CD8-positive, alpha-beta T cell (primary cell): ENCODE measurements at regions of chr18 and their contacts with region 1.

Region 1: DNA sequence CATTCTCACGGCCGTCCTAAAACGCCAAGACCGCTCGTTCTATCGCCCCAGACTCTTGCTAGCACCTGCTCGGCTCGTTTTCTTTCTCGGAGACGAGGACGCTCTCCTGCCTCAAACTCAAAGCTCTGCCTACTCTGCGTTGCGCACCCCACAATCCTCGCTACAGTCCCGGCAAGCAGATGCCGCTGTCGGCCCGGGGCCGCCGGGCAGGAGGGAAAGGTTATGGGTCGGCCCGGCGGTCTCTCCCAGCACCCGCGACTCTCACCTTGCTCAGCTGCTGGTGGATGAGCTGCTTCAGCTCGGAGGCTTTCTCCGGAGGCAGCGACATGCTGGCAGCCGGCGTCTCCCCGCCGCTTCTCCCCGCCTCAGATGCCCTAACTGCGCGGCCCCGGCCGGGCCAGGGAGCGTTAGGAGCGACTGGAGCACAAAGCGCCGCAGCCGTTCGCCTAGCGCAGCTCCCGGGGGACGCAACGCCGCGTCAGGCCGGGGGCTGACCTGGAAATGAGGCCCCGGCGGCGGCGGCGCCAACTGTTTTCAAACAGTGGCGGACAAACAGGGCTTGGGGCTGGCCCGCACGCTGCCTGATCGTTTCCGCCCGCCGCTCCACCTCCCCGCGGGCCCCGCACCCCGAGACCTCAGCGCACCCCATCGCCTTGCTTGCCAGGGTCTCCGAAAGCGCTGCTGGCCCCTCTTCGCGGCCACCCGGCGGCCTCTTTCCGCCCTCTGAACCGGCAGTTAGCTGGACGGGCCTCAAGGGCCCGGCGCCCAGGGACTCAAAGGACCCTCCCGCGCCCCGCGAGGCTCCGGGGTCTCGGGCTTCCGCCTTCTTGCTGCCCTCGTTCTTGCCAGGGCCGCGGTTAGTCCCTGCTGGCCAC is at the starts of genes CEP76 and PSMG2:
- DNase-seq: peak; percentile 68 to 91 (median 83)
- ATAC-seq: peak; percentile 78
- H3K4me3 ChIP-seq: peak within 1 kb of the TSS; percentile 70 to 96
- H3K4me3 Mint-ChIP-seq: peak within 1 kb of the TSS; percentile 96
- H3K27ac ChIP-seq: peak within 1 kb of the TSS; percentile 95 to 98
- H3K27ac Mint-ChIP-seq: peak within 1 kb of the TSS; percentile 100
- H3K4me1 ChIP-seq: peaks cover 30% of the 10 kb centered on the region
- H3K4me1 Mint-ChIP-seq: peaks cover 52% of the 10 kb centered on the region
- H3K27me3 ChIP-seq: no peaks in the 10 kb centered on the region
- H3K27me3 Mint-ChIP-seq: no peaks in the 10 kb centered on the region
- CTCF ChIP-seq: no peak
- total RNA-seq, gene CEP76: 10.9 to 11.0 TPM
- total RNA-seq, gene PSMG2: 80.3 to 81.7 TPM

Region 2: GRCh38 chr18:11119962-11120361 is 1582.5 kb before region 1 on chr18:
- CTCF ChIA-PET with region 1: no interaction called
- POLR2A ChIA-PET with region 1: no interaction called
- intact Hi-C with region 1: no loop called
- DNase-seq: no peak
- ATAC-seq: no peak
- H3K4me3 ChIP-seq: no peak overlapping the region
- H3K4me3 Mint-ChIP-seq: no peak overlapping the region
- H3K27ac ChIP-seq: no peak overlapping the region
- H3K27ac Mint-ChIP-seq: no peak overlapping the region
- H3K4me1 ChIP-seq: no peaks in the 10 kb centered on the region
- H3K4me1 Mint-ChIP-seq: no peaks in the 10 kb centered on the region
- H3K27me3 ChIP-seq: no peaks in the 10 kb centered on the region
- H3K27me3 Mint-ChIP-seq: no peaks in the 10 kb centered on the region
- CTCF ChIP-seq: no peak

Region 3: GRCh38 chr18:12408247-12408869 is 294.1 kb before region 1 on chr18:
- CTCF ChIA-PET with region 1: no interaction called
- POLR2A ChIA-PET with region 1: interaction called, 3 read pairs
- intact Hi-C with region 1: loop called in 1 of 2 experiments (anchors 2 kb)
- DNase-seq: peak in 3 of 9 experiments; percentile 31 to 52 (median 42)
- ATAC-seq: peak; percentile 9
- H3K4me3 ChIP-seq: peak overlapping the region in 1 of 2 experiments; percentile 71
- H3K4me3 Mint-ChIP-seq: peak overlapping the region; percentile 72
- H3K27ac ChIP-seq: no peak overlapping the region
- H3K27ac Mint-ChIP-seq: peak overlapping the region; percentile 30
- H3K4me1 ChIP-seq: peaks cover 18% of the 10 kb centered on the region
- H3K4me1 Mint-ChIP-seq: peaks cover 21% of the 10 kb centered on the region
- H3K27me3 ChIP-seq: no peaks in the 10 kb centered on the region
- H3K27me3 Mint-ChIP-seq: peaks cover 10% of the 10 kb centered on the region
- CTCF ChIP-seq: no peak

Region 4: DNA sequence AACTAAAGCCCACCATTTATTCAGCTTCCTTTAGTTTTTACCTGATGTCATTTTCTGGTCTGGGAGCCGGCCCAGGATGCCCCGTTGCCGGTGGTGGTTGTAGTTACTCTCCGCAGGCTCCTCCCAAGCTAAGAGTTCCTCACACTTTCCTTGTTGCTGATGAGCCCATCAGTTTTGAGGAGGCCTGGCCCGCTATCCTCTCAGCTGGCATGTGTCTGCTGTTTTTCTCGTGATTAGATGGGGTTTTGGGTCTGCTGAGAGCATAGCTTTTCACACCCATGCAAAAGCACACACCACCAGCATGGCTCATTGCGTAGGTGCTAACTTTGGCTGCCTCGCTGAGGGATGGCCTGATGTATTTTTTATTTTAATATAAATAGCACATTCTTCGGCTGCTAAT is 72.5 kb after region 1 on chr18:
- CTCF ChIA-PET with region 1: no interaction called
- POLR2A ChIA-PET with region 1: interaction called, 11 read pairs
- intact Hi-C with region 1: no loop called
- DNase-seq: peak in 5 of 9 experiments; percentile 7 to 79 (median 30)
- ATAC-seq: peak; percentile 62
- H3K4me3 ChIP-seq: peak overlapping the region; percentile 63
- H3K4me3 Mint-ChIP-seq: peak overlapping the region; percentile 87
- H3K27ac ChIP-seq: peak overlapping the region; percentile 71 to 76
- H3K27ac Mint-ChIP-seq: peak overlapping the region; percentile 94
- H3K4me1 ChIP-seq: no peaks in the 10 kb centered on the region
- H3K4me1 Mint-ChIP-seq: peaks cover 28% of the 10 kb centered on the region
- H3K27me3 ChIP-seq: no peaks in the 10 kb centered on the region
- H3K27me3 Mint-ChIP-seq: no peaks in the 10 kb centered on the region
- CTCF ChIP-seq: no peak

Region 5: GRCh38 chr18:12973562-12974213 is 271.2 kb after region 1 on chr18:
- CTCF ChIA-PET with region 1: no interaction called
- POLR2A ChIA-PET with region 1: no interaction called
- intact Hi-C with region 1: no loop called
- DNase-seq: peak in 1 of 9 experiments; percentile 21
- ATAC-seq: no peak
- H3K4me3 ChIP-seq: no peak overlapping the region
- H3K4me3 Mint-ChIP-seq: no peak overlapping the region
- H3K27ac ChIP-seq: no peak overlapping the region
- H3K27ac Mint-ChIP-seq: no peak overlapping the region
- H3K4me1 ChIP-seq: no peaks in the 10 kb centered on the region
- H3K4me1 Mint-ChIP-seq: peaks cover 3% of the 10 kb centered on the region
- H3K27me3 ChIP-seq: no peaks in the 10 kb centered on the region
- H3K27me3 Mint-ChIP-seq: no peaks in the 10 kb centered on the region
- CTCF ChIP-seq: no peak

Region 6: DNA sequence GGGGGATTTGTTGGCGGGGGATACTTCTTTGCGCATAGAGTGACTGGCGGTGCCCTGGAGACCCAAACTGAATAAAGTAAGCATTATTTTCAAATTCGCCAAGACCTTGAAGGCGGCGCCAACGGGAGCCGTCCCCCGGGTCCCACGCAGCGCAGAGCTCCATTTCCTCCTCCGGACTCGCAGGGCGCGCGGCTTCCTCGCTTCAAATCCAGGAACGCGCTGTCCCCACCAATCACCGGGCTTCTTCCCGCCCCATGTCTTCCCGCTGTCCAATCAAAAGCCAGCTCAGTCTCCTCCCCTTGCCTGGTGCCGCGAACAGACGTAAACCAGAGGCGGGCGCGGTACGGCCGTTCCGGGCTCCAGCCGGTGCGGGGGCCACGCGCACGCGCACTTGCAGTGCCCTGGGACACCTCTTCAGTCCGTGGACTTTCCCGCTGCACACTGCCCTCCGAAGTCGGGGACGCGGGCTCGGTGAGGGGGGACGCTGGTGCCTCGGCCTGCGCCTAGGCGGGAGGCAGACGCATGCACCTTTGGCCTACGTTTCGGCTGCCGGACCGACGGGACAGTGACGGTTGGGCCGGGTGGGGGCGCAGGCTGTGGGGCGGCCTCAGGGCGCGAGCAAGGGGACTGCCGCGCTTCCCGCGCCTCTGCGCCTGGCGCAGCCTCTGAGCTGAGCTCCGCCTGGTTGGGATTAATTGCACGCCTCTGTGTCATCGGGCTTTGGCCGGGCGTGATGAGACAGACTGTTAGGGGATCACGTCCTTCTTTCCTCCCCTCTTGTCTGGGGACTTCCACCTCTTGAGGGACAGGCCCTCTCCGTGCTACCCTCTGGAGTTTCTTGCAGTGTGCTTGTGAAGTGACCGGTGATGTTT is 288.7 kb after region 1 on chr18 and contains the start of gene CEP192:
- CTCF ChIA-PET with region 1: no interaction called
- POLR2A ChIA-PET with region 1: interaction called, 5 read pairs
- intact Hi-C with region 1: loop called (anchors 5 kb)
- DNase-seq: peak; percentile 94 to 99 (median 97)
- ATAC-seq: peak; percentile 96
- H3K4me3 ChIP-seq: peak within 1 kb of the TSS; percentile 79 to 90
- H3K4me3 Mint-ChIP-seq: peak within 1 kb of the TSS; percentile 98
- H3K27ac ChIP-seq: peak within 1 kb of the TSS; percentile 57 to 75
- H3K27ac Mint-ChIP-seq: peak within 1 kb of the TSS; percentile 97
- H3K4me1 ChIP-seq: peaks cover 27% of the 10 kb centered on the region
- H3K4me1 Mint-ChIP-seq: peaks cover 17% of the 10 kb centered on the region
- H3K27me3 ChIP-seq: no peaks in the 10 kb centered on the region
- H3K27me3 Mint-ChIP-seq: no peaks in the 10 kb centered on the region
- CTCF ChIP-seq: no peak
- total RNA-seq, gene CEP192: 22.8 to 24.3 TPM